ENCODE measurements at regions of chr7 and their contacts with region 1.

Region 1: DNA sequence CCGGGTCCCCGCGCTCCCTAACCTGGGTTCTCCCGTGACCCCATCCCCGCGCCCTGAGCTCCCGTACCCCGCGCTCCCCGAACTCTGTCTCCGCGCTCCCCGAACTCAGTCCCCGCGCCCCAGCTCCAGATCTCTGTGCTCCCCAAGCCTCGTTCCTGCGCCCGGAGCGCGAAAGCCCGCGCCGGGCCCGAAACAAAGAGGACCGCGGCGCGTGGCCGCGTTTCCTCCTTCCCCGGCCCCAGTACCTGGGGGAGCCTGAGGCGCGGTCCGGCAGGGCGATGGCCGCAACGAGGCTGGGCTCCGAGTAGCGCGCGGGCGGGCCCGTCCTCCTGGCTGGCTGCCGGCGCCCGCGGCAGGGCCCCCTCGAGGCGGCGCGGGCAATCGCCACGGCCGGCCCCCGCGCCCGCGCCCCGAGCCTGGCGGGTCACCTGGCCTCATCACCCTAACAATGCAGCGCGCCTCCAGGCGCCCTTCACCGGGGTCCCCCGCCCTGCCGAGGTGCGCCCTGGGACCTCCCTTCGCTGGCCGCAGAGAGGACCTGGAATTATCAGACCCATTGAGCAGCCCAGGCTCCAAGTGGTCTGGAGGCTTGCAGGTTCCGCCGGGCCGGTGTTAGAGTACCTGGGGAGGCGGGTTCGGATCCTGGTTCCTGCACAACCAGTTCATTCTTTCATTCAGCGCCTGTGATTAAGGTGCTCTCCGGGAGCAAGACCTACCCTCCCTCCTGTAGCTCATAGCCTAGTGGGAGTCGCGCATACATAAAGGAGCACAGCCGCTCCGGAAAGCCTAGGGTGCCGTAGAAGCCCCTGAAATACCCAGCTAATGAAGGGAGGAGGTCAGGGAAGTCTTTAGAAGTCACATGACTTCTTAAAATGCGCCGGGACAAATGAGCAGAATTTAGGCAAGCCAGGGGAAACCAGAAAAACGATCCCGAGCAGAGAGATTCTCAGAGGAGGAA is at the start of gene TNS3:
- DNase-seq: peak; percentile 62 to 84
- ATAC-seq: peak; percentile 45
- H3K4me3 ChIP-seq: peak within 1 kb of the TSS; percentile 75 to 80
- H3K27ac ChIP-seq: peak within 1 kb of the TSS; percentile 8 to 90
- H3K4me1 ChIP-seq: peaks cover 4 to 10% of the 10 kb centered on the region in 2 donors
- H3K27me3 ChIP-seq: no peaks in the 10 kb centered on the region
- total RNA-seq, gene TNS3: 117 to 140 TPM

Region 2: GRCh38 chr7:47435889-47436312 is 146.2 kb before region 1 on chr7:
- intact Hi-C with region 1: loop called (anchors 5 to 10 kb)
- DNase-seq: peak; percentile 77 to 86
- ATAC-seq: peak; percentile 74
- H3K4me3 ChIP-seq: no peak overlapping the region
- H3K27ac ChIP-seq: no peak overlapping the region
- H3K4me1 ChIP-seq: no peaks in the 10 kb centered on the region
- H3K27me3 ChIP-seq: no peaks in the 10 kb centered on the region

Region 3: GRCh38 chr7:47482013-47482875 is 99.8 kb before region 1 on chr7:
- intact Hi-C with region 1: loop called in 1 of 2 experiments (anchors 5 kb)
- DNase-seq: peak; percentile 76 to 90
- ATAC-seq: peak; percentile 76
- H3K4me3 ChIP-seq: no peak overlapping the region
- H3K27ac ChIP-seq: peak overlapping the region; percentile 57 to 100
- H3K4me1 ChIP-seq: peaks cover 0 to 2% of the 10 kb centered on the region in 2 donors
- H3K27me3 ChIP-seq: no peaks in the 10 kb centered on the region

Region 4: GRCh38 chr7:47635091-47636080 is 53.3 kb after region 1 on chr7:
- intact Hi-C with region 1: loop called (anchors 5 to 10 kb)
- DNase-seq: peak; percentile 64 to 84
- ATAC-seq: no peak
- H3K4me3 ChIP-seq: no peak overlapping the region
- H3K27ac ChIP-seq: peak overlapping the region; percentile 60 to 91
- H3K4me1 ChIP-seq: peaks cover 0 to 4% of the 10 kb centered on the region in 2 donors
- H3K27me3 ChIP-seq: no peaks in the 10 kb centered on the region

Region 5: DNA sequence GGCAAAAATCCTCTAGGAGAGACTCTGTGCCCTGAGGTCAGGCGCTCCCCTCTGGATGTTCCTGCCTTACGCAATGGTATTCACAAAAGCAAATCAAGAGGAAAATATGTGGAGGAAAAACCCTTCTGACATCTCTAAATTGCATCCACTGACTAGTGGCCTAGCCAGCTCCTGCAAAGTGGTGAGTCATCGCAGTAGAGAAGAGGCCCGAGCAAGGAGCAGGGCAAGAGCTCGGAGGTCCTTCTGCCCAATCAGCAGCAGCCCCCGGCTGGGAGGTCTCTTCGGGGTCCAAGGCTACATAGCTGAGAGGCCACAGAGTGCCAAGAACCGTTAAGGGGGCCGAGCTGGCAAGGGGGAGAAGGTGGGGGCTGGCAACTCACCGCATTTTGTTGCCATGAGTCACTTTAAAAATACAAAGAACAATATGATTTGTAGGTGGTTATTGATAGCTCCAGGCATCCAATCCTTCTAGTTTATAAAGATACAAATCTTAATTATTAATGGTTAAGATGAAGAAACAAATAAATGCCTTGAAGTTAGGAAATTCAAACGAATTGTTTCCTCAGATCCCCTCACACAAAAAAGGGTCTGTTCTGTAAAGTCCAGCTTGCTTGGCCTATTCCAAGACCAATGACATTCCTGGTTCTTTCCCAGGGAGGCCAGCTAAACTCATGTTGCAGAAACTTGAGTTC is 204.6 kb after region 1 on chr7:
- intact Hi-C with region 1: loop called in 1 of 2 experiments (anchors 10 kb)
- DNase-seq: peak; percentile 85 to 87
- ATAC-seq: peak; percentile 89
- H3K4me3 ChIP-seq: no peak overlapping the region
- H3K27ac ChIP-seq: peak overlapping the region; percentile 87 to 93
- H3K4me1 ChIP-seq: peaks cover 5 to 16% of the 10 kb centered on the region in 2 donors
- H3K27me3 ChIP-seq: no peaks in the 10 kb centered on the region